Sciatic nerve (tissue), 2 donors: ENCODE measurements at regions of chr17 and their contacts with region 1.

Region 1: DNA sequence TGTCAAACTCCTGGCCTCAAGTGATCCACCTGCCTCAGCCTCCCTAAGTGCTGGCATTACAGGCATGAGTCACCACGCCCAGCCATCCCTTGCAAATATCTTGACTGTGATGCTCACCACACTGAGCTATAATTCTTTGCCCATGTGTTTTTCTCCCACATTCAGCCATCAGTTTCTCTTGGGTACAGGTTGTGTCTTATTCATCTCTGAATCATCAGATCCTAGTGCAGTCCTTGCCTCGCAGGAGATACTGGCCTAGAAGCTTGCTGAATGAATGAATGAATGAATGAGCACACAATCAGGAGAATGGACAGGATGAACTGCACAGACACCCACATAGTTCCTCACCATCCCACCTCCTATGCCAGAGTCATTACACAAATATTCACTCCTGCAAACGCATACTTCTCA is 24.4 kb upstream of the ETV4 start:
- DNase-seq: no peak
- ATAC-seq: no peak

Region 2: GRCh38 chr17:43753493-43754129 is 183.1 kb after region 1 on chr17:
- intact Hi-C with region 1: loop called (anchors 5 kb)
- DNase-seq: no peak
- ATAC-seq: no peak